Naive thymus-derived CD4-positive, alpha-beta T cell (primary cell): ENCODE measurements at regions of chr22 and their contacts with region 1.

Region 1: GRCh38 chr22:28829358-28830181 is 29.2 kb upstream of the XBP1 start:
- DNase-seq: peak; percentile 50 to 74 (median 69)
- ATAC-seq: peak; percentile 95
- H3K4me3 ChIP-seq: no peak overlapping the region
- H3K4me3 Mint-ChIP-seq: peak overlapping the region; percentile 39 to 75 (median 59)
- H3K27ac ChIP-seq: no peak overlapping the region
- H3K27ac Mint-ChIP-seq: peak overlapping the region in 6 of 9 donors; percentile 33 to 87 (median 66)
- H3K4me1 ChIP-seq: peaks cover 6 to 7% of the 10 kb centered on the region in 2 donors
- H3K4me1 Mint-ChIP-seq: peaks cover 8 to 44% (median 27%) of the 10 kb centered on the region in 7 donors
- H3K27me3 ChIP-seq: no peaks in the 10 kb centered on the region
- H3K27me3 Mint-ChIP-seq: no peaks in the 10 kb centered on the region

Region 2: DNA sequence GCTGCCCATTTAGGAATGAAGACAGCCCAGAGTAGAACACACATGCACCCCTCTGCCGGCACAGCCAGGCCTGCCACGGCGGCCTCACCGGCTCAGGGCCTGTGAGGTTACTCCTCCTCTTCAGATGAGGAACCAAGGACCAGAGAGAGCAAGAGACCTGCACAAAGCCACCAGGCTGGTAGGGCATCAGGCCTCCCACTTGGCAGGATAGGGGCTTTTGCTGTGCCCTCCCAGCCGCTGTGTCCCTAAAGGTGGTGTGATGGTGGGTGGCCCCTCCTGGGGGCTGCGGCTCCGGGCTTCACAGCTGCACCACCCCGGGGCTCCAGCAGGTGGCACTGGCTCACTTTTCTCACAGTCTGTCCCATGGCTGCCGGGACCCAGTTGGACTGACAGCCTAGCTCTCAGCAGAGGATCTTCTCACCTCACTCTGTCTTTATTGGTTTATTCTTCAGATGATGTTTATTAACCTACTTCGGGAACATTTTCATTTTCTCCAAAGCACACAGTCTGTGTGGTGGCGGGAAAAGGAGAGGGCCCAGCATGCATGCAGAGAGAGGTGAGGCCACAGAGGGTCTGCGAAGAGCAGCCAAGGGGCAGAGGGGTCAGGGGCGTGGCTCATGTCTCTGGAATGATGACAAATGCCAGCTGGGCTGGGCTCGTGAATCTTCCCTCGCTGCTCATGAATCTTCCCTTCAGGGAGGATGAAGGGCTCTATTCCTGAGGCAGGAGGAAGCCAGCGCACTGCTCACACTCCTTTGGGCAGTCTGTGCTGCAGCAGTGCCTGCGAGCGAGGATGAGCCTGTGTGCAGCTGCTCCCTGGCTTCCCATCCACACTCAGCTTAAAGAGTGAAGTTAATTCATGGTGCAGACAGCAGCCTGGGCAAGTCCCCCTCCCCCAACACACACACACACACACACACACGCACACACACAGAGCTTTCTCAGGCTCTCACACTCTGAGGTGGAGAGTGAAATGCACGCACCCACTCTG is 809.4 kb before region 1 on chr22:
- CTCF ChIA-PET with region 1: no interaction called
- POLR2A ChIA-PET with region 1: no interaction called
- intact Hi-C with region 1: loop called in 1 of 2 experiments (anchors 5 kb)
- DNase-seq: peak; percentile 27 to 69 (median 61)
- ATAC-seq: peak; percentile 81
- H3K4me3 ChIP-seq: no peak overlapping the region
- H3K4me3 Mint-ChIP-seq: no peak overlapping the region
- H3K27ac ChIP-seq: no peak overlapping the region
- H3K27ac Mint-ChIP-seq: no peak overlapping the region
- H3K4me1 ChIP-seq: no peaks in the 10 kb centered on the region
- H3K4me1 Mint-ChIP-seq: peaks cover 0 to 8% (median 0%) of the 10 kb centered on the region in 7 donors
- H3K27me3 ChIP-seq: no peaks in the 10 kb centered on the region
- H3K27me3 Mint-ChIP-seq: no peaks in the 10 kb centered on the region

Region 3: GRCh38 chr22:28711820-28712777 is 117.5 kb before region 1 on chr22:
- CTCF ChIA-PET with region 1: no interaction called
- POLR2A ChIA-PET with region 1: no interaction called
- intact Hi-C with region 1: no loop called
- DNase-seq: no peak
- ATAC-seq: no peak
- H3K4me3 ChIP-seq: no peak overlapping the region
- H3K4me3 Mint-ChIP-seq: no peak overlapping the region
- H3K27ac ChIP-seq: no peak overlapping the region
- H3K27ac Mint-ChIP-seq: no peak overlapping the region
- H3K4me1 ChIP-seq: no peaks in the 10 kb centered on the region
- H3K4me1 Mint-ChIP-seq: peaks cover 0 to 19% (median 0%) of the 10 kb centered on the region in 7 donors
- H3K27me3 ChIP-seq: no peaks in the 10 kb centered on the region
- H3K27me3 Mint-ChIP-seq: no peaks in the 10 kb centered on the region

Region 4: DNA sequence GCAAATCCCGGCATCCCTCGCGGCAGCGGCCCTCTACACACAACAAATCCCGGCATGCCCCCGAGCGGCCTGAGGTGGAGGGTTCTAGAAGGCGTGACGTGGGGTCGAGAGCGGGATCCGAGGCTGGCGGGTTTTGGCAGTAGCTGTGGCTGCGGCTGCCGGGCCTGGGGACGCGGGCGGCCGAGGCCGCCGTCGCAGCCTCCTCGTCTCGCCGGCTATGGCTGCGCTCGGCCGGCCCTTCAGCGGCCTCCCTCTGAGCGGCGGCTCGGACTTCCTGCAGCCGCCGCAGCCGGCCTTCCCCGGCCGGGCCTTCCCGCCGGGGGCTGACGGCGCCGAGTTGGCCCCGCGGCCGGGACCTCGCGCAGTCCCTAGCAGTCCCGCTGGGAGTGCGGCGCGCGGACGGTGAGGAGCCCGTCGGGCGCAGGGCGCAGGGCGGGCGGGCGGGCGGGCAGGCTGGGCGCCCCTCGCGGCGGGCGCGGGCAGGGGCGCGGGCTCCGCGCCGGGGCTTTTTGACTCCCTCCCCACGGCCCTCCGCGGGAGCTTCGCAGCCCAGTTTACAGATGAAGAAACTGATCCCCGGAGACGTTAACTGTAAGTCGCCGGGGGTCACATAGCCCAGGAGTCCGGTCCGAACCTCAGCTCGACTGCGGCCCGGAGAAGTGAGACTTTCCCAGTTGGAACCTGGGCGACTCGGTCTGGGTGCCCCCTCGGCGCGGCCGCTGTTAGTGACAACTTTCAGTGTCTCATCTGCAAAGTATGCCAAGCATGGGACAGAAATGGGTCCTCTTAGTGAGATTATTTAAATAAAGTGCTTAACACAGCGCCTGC is 56.7 kb before region 1 on chr22 and contains the start of gene CCDC117:
- CTCF ChIA-PET with region 1: interaction called, 3 read pairs
- POLR2A ChIA-PET with region 1: interaction called, 3 read pairs
- intact Hi-C with region 1: loop called in 1 of 2 experiments (anchors 1 kb)
- DNase-seq: peak; percentile 76 to 93 (median 88)
- ATAC-seq: peak; percentile 97
- H3K4me3 ChIP-seq: peak within 1 kb of the TSS; percentile 83
- H3K4me3 Mint-ChIP-seq: peak within 1 kb of the TSS; percentile 84 to 100 (median 97)
- H3K27ac ChIP-seq: peak within 1 kb of the TSS; percentile 91
- H3K27ac Mint-ChIP-seq: peak within 1 kb of the TSS; percentile 86 to 98 (median 91)
- H3K4me1 ChIP-seq: peaks cover 13 to 17% of the 10 kb centered on the region in 2 donors
- H3K4me1 Mint-ChIP-seq: peaks cover 17 to 46% (median 31%) of the 10 kb centered on the region in 7 donors
- H3K27me3 ChIP-seq: no peaks in the 10 kb centered on the region
- H3K27me3 Mint-ChIP-seq: peaks cover 0 to 2% (median 0%) of the 10 kb centered on the region in 5 donors
- total RNA-seq, gene CCDC117: 13.5 to 33.5 (median 21.2) TPM

Region 5: DNA sequence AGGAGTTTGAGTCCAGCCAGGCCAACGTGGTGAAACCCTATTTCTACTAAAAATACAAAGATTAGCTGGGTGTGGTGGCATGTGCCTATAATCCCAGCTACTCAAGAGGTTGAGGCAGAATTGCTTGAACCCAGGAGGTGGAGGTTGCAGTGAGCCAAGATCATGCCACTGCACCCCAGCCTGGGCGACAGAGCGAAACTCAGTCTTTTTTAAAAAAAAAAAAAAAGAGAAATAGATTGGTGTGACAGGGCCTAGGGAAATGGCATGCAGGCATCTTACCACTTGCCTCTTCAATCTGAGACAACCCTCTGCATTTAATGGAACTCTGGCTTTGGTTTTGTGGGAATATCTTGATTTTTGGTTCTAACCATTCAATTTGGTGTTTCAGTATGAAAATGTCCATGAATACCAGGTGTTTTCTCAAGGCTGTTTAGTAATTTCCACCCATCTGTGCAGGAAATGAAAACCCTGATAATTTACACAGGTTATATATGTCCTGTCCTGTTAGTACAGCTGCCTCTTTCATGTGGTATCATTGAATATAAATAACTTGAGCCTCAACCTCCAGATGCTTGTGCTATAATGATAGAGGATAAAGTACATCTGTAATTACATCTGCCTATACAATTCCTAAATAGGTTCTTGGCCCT is 37.6 kb before region 1 on chr22:
- CTCF ChIA-PET with region 1: interaction called, 82 read pairs
- POLR2A ChIA-PET with region 1: interaction called, 46 read pairs
- intact Hi-C with region 1: loop called (anchors 1 kb)
- DNase-seq: no peak
- ATAC-seq: peak; percentile 23
- H3K4me3 ChIP-seq: no peak overlapping the region
- H3K4me3 Mint-ChIP-seq: peak overlapping the region in 5 of 10 donors; percentile 10 to 40 (median 34)
- H3K27ac ChIP-seq: no peak overlapping the region
- H3K27ac Mint-ChIP-seq: peak overlapping the region; percentile 12 to 97 (median 63)
- H3K4me1 ChIP-seq: peaks cover 22 to 34% of the 10 kb centered on the region in 2 donors
- H3K4me1 Mint-ChIP-seq: peaks cover 38 to 74% (median 66%) of the 10 kb centered on the region in 7 donors
- H3K27me3 ChIP-seq: no peaks in the 10 kb centered on the region
- H3K27me3 Mint-ChIP-seq: no peaks in the 10 kb centered on the region

Region 6: GRCh38 chr22:29143941-29144785 is 314.6 kb after region 1 on chr22:
- CTCF ChIA-PET with region 1: no interaction called
- POLR2A ChIA-PET with region 1: no interaction called
- intact Hi-C with region 1: no loop called
- DNase-seq: no peak
- ATAC-seq: no peak
- H3K4me3 ChIP-seq: no peak overlapping the region
- H3K4me3 Mint-ChIP-seq: no peak overlapping the region
- H3K27ac ChIP-seq: no peak overlapping the region
- H3K27ac Mint-ChIP-seq: peak overlapping the region in 1 of 9 donors; percentile 38
- H3K4me1 ChIP-seq: no peaks in the 10 kb centered on the region
- H3K4me1 Mint-ChIP-seq: no peaks in the 10 kb centered on the region
- H3K27me3 ChIP-seq: no peaks in the 10 kb centered on the region
- H3K27me3 Mint-ChIP-seq: peaks cover 0 to 5% (median 0%) of the 10 kb centered on the region in 5 donors